ENCODE measurements at regions of chr17 and their contacts with region 1.

Region 1: GRCh38 chr17:11372692-11373091 is 131.7 kb downstream of the SHISA6 start:
- DNase-seq: no peak
- H3K4me3 ChIP-seq: no peak overlapping the region
- H3K27ac ChIP-seq: no peak overlapping the region
- H3K4me1 ChIP-seq: no peaks in the 10 kb centered on the region
- H3K27me3 ChIP-seq: no peaks in the 10 kb centered on the region
- CTCF ChIP-seq: no peak
- POLR2A ChIP-seq: no peak

Region 2: GRCh38 chr17:11356371-11356770 is 16.3 kb before region 1 on chr17:
- intact Hi-C with region 1: loop called (anchors 1 kb)
- DNase-seq: no peak
- H3K4me3 ChIP-seq: no peak overlapping the region
- H3K27ac ChIP-seq: no peak overlapping the region
- H3K4me1 ChIP-seq: no peaks in the 10 kb centered on the region
- H3K27me3 ChIP-seq: no peaks in the 10 kb centered on the region
- CTCF ChIP-seq: no peak
- POLR2A ChIP-seq: no peak